ENCODE measurements at regions of chr6 and their contacts with region 1.

Region 1: GRCh38 chr6:16514249-16514648 is 247.0 kb downstream of the ATXN1 start:
- DNase-seq: peak in 4 of 5 donors; percentile 39 to 48 (median 42)
- H3K4me3 ChIP-seq: no peak overlapping the region
- H3K4me3 Mint-ChIP-seq: peak overlapping the region in 4 of 8 donors; percentile 22 to 65 (median 34)
- H3K27ac ChIP-seq: no peak overlapping the region
- H3K27ac Mint-ChIP-seq: peak overlapping the region; percentile 49 to 95 (median 85)
- H3K4me1 ChIP-seq: peaks cover 54% of the 10 kb centered on the region
- H3K4me1 Mint-ChIP-seq: peaks cover 53 to 73% (median 65%) of the 10 kb centered on the region in 4 donors
- H3K27me3 ChIP-seq: no peaks in the 10 kb centered on the region
- H3K27me3 Mint-ChIP-seq: no peaks in the 10 kb centered on the region

Region 2: DNA sequence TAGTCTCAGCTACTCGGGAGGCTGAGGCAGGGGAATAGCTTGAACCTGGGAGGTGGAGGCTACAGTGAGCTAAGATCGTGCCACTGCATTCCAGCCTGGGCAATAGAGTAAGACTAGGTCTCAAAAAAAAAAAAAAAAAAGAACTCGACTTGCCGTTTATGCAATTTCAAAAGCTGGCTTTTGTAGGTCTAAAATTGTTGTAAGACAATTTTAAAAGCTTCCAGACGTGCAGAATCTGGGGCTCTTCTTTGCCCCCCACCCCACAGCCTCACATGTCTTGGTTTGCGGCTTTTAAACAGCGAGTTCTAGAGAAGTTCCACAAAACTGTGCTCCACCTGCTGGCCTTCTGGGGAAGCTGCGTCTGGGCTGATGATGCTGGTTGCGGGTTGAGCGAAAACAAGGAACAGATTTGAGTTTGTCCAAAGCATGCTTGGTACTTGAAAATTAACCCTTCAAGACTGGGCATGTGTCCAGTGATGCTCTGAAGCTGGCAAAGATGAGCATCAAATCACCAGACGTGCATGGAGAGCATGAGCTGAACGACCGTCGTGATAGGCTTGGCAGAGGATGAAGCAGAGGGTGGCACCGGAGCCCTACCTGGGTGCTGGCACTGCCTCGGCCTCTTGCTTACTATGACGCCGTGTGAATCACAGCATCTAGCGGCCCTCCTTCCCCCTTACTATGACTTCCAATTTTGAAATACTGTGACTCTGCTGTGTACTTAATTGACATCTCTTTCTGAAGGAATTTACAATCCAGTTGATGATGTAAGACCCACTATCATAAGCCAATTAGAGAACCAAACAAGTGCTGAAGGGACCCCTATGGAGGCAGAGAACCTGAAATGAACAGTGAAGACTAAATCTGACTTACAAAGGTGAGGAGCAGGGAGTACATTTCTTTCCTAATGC is 104.5 kb before region 1 on chr6:
- CTCF ChIA-PET with region 1: interaction called, 14 read pairs
- POLR2A ChIA-PET with region 1: interaction called, 3 read pairs
- intact Hi-C with region 1: no loop called
- DNase-seq: peak; percentile 45 to 78 (median 54)
- H3K4me3 ChIP-seq: no peak overlapping the region
- H3K4me3 Mint-ChIP-seq: peak overlapping the region in 7 of 8 donors; percentile 49 to 71 (median 68)
- H3K27ac ChIP-seq: no peak overlapping the region
- H3K27ac Mint-ChIP-seq: peak overlapping the region in 6 of 7 donors; percentile 7 to 78 (median 68)
- H3K4me1 ChIP-seq: peaks cover 22% of the 10 kb centered on the region
- H3K4me1 Mint-ChIP-seq: peaks cover 33 to 61% (median 48%) of the 10 kb centered on the region in 4 donors
- H3K27me3 ChIP-seq: no peaks in the 10 kb centered on the region
- H3K27me3 Mint-ChIP-seq: no peaks in the 10 kb centered on the region

Region 3: GRCh38 chr6:16494793-16495192 is 19.5 kb before region 1 on chr6:
- CTCF ChIA-PET with region 1: interaction called, 20 read pairs
- POLR2A ChIA-PET with region 1: no interaction called
- intact Hi-C with region 1: no loop called
- DNase-seq: no peak
- H3K4me3 ChIP-seq: no peak overlapping the region
- H3K4me3 Mint-ChIP-seq: no peak overlapping the region
- H3K27ac ChIP-seq: no peak overlapping the region
- H3K27ac Mint-ChIP-seq: peak overlapping the region in 3 of 7 donors; percentile 56 to 72 (median 58)
- H3K4me1 ChIP-seq: peaks cover 30% of the 10 kb centered on the region
- H3K4me1 Mint-ChIP-seq: peaks cover 33 to 49% (median 46%) of the 10 kb centered on the region in 4 donors
- H3K27me3 ChIP-seq: no peaks in the 10 kb centered on the region
- H3K27me3 Mint-ChIP-seq: no peaks in the 10 kb centered on the region

Region 4: DNA sequence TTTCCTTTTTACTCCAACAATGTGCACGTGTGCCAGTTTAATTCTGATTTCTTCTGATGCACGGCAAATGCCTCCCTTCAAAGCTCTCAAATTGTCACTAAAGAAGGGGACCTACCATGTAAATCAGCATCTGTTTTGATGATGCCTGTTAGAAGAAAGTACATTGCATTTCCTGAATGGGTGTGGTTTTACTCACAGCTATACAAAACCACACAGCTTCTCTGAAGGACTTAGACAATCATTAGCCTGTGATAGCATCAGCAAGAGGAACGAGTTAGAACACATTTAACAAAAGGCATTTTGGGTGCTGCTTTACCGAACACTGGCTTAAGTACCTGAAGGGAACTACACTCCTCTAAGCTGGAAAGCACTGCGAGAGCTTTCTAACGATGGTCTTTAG is 137.6 kb after region 1 on chr6:
- CTCF ChIA-PET with region 1: interaction called, 25 read pairs
- POLR2A ChIA-PET with region 1: interaction called, 5 read pairs
- intact Hi-C with region 1: no loop called
- DNase-seq: peak; percentile 65 to 83 (median 79)
- H3K4me3 ChIP-seq: peak overlapping the region in 1 of 2 donors; percentile 6
- H3K4me3 Mint-ChIP-seq: peak overlapping the region; percentile 39 to 78 (median 70)
- H3K27ac ChIP-seq: peak overlapping the region; percentile 38
- H3K27ac Mint-ChIP-seq: peak overlapping the region; percentile 89 to 99 (median 93)
- H3K4me1 ChIP-seq: peaks cover 63% of the 10 kb centered on the region
- H3K4me1 Mint-ChIP-seq: peaks cover 46 to 66% (median 54%) of the 10 kb centered on the region in 4 donors
- H3K27me3 ChIP-seq: no peaks in the 10 kb centered on the region
- H3K27me3 Mint-ChIP-seq: no peaks in the 10 kb centered on the region

Region 5: DNA sequence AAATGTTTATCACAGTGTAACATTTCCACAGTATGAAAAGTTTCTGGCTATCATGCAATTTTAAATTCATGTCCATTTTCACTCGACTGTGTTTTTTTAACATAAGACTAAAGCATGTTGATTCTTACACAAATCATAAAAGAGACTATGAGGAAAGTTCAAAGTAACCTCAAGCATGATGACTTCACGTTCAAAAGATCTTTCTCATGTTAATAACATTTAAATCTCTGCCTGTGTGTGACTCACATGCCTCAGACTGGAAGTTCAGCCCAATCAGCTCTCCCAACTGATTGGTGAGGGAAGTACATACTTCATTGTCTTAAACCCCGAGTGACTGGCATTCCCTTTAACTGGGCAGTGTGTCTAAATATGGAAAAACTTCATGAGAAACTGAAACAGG is 209.6 kb after region 1 on chr6:
- CTCF ChIA-PET with region 1: interaction called, 81 read pairs
- POLR2A ChIA-PET with region 1: no interaction called
- intact Hi-C with region 1: no loop called
- DNase-seq: peak in 1 of 5 donors; percentile 60
- H3K4me3 ChIP-seq: no peak overlapping the region
- H3K4me3 Mint-ChIP-seq: peak overlapping the region in 2 of 8 donors; percentile 23 to 57
- H3K27ac ChIP-seq: no peak overlapping the region
- H3K27ac Mint-ChIP-seq: peak overlapping the region in 6 of 7 donors; percentile 30 to 82 (median 70)
- H3K4me1 ChIP-seq: peaks cover 24% of the 10 kb centered on the region
- H3K4me1 Mint-ChIP-seq: peaks cover 18 to 67% (median 42%) of the 10 kb centered on the region in 4 donors
- H3K27me3 ChIP-seq: no peaks in the 10 kb centered on the region
- H3K27me3 Mint-ChIP-seq: no peaks in the 10 kb centered on the region